ENCODE measurements at regions of chr7 and their contacts with region 1.

Region 1: DNA sequence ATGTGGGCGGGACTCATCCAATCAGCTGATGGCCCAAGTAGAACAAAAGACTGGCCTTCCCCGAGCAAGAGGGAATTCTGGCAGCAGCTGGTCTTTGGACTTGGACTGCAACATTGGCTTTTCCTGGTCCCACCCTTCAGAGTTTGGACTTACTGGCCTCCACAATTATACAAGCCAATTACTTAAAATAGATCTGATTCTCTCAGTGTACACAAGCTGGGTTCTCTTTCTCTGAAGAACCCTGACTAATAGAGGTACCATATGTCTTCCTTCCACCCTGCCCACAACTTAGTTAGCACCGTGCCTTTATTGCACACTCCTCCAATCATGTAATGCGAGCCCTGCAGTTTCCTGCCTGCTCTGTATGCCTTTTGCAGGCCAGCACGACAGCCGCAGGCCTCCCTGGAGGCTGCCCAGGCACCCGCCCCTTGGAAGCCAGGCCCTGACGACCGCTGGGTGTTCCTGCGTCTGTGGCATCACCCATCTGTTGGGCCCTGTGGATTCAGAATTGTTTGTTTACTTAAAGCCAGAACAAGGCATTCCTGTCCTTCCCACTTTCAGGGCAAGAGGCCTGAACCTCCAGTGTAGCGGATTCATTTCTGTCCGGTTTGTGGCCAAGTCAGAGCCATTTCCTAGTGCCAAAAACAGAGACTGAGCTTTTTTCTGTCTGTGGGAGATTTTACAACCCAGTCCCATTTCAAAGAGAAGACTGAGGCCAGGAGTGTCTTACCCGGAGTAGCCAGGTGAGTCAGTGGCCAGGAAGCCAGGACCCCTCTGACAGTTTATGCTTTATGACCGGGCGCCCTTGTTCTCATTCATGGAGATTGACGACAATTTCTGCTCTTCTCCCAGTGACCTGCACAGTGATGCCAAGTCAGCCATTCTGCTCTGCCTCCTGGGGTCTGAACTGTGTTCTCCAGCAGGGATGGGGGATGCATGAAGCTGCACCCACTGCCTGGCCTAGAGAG is 968 bp upstream of the INMT start:
- DNase-seq: peak; percentile 86 to 87
- ATAC-seq: peak; percentile 75
- H3K4me3 ChIP-seq: no peak overlapping the region
- H3K27ac ChIP-seq: peak overlapping the region; percentile 42 to 59
- H3K4me1 ChIP-seq: no peaks in the 10 kb centered on the region
- H3K27me3 ChIP-seq: no peaks in the 10 kb centered on the region

Region 2: DNA sequence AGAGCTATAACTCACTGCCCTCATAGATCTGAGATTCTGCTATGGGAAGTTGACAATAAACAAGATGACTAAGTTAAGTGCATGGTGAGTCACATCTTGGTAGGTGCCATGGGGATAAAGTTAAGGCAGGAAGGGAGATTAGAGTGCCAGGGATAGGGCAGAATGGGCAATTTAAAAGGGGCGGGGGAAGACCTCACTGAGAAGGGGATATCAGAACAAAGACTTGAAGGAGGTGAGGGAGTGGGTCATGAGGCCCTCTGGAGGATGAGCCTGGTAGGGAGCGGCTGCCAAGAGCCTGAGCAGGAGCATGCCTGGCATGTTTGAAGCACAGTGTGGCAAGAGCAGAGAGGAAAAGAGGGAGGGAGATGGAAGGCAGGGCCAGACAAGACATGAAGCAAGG is 33.8 kb before region 1 on chr7:
- intact Hi-C with region 1: no loop called
- DNase-seq: peak in 1 of 2 donors; percentile 13
- ATAC-seq: no peak
- H3K4me3 ChIP-seq: no peak overlapping the region
- H3K27ac ChIP-seq: no peak overlapping the region
- H3K4me1 ChIP-seq: no peaks in the 10 kb centered on the region
- H3K27me3 ChIP-seq: no peaks in the 10 kb centered on the region

Region 3: GRCh38 chr7:30789334-30789711 is 38.4 kb after region 1 on chr7:
- intact Hi-C with region 1: loop called (anchors 2 to 5 kb)
- DNase-seq: peak in 1 of 2 donors; percentile 62
- ATAC-seq: peak; percentile 89
- H3K4me3 ChIP-seq: no peak overlapping the region
- H3K27ac ChIP-seq: peak overlapping the region in 1 of 2 donors; percentile 52
- H3K4me1 ChIP-seq: no peaks in the 10 kb centered on the region
- H3K27me3 ChIP-seq: no peaks in the 10 kb centered on the region

Region 4: GRCh38 chr7:31302356-31302755 is 551.4 kb after region 1 on chr7:
- intact Hi-C with region 1: no loop called
- DNase-seq: no peak
- ATAC-seq: no peak
- H3K4me3 ChIP-seq: no peak overlapping the region
- H3K27ac ChIP-seq: no peak overlapping the region
- H3K4me1 ChIP-seq: peaks cover 0 to 2% of the 10 kb centered on the region in 2 donors
- H3K27me3 ChIP-seq: no peaks in the 10 kb centered on the region